Ovary (tissue), 10 donors: ENCODE measurements at regions of chr14 and their contacts with region 1.

Region 1: DNA sequence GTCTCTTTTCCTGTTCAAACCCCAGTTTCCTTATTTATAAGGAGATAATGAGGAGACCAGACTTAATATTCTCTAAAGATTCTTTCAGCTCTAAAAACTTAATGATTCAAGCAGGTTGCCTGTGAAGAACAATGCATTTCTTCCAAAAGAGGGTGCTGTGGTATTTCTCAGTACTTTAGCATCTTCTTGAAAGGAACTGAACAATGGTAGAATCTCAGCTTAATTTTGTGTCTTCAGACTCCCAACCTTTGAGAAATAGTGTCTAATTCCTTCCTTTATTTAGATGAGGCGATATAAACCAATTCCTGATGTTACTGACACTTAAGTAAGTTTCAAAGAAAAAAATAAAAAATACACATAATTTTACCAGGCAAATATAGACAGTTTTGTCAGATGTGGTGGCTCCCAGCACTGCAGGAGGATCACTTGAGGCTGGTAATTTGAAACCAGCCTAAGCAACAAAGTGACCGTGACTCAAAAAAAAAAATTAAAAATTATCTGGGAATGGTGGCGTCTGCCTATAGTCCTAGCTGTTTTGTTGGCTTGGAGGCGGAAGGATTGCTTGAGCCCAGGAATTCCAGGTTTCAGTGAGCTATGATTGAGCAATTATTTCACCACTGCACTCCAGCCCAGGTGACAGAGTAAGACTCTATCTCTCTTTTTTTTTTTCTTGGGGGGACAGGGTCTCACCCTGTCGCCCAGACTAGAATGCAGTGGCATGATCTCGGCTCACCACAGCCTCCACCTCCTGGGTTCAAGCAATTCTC is 76.9 kb upstream of the PSMA6 start:
- DNase-seq: no peak
- H3K4me3 ChIP-seq: no peak overlapping the region
- H3K27ac ChIP-seq: peak overlapping the region in 1 of 2 donors; percentile 79
- H3K4me1 ChIP-seq: peaks cover 1% of the 10 kb centered on the region
- H3K27me3 ChIP-seq: no peaks in the 10 kb centered on the region
- CTCF ChIP-seq: peak in 2 of 3 donors; percentile 25 to 53
- EP300 ChIP-seq: no peak
- POLR2A ChIP-seq: no peak

Region 2: GRCh38 chr14:35140718-35141581 is 74.3 kb before region 1 on chr14:
- intact Hi-C with region 1: loop called in 2 of 4 experiments (anchors 10 kb)
- DNase-seq: no peak
- H3K4me3 ChIP-seq: no peak overlapping the region
- H3K27ac ChIP-seq: no peak overlapping the region
- H3K4me1 ChIP-seq: no peaks in the 10 kb centered on the region
- H3K27me3 ChIP-seq: no peaks in the 10 kb centered on the region
- CTCF ChIP-seq: peak in 2 of 3 donors; percentile 37 to 60
- EP300 ChIP-seq: no peak
- POLR2A ChIP-seq: no peak

Region 3: DNA sequence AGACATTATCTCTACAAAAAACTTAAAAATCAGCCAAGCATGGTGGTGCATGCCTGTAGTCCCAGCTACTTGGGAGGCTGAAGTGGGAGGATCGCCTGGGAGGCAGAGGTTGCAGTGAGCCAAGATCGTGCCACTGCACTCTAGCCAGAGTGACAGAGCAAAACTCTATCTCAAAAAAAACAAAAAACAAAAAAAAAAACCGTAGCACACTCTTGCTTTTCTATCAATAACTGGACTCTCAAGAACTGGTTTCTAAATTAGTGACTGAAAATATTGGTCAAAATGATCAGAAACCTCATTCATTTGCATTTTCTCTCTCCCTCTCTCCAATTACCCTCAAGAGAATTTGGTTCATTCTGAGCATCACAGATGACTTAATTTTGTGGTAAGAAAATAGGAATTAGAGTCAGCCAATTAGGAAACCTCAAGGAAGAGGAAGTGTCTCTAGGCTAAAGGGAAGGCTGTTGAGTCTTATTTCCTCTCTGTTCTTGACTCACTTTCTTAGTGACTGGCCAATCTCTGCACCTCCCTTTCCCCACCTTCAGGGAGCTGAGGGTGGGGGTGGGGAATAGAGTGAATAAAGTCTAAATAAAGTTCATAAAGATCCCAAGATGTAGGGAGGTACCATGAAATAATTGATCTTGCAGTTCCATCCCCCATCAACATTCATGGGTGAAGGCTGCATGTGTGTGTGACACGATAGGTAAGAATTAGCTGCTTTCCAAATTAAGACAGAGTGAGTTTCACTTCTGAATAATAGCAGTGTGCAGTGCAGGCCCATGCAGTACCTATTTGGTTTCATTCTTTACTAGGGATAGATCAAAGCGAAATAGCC is 70.1 kb after region 1 on chr14:
- intact Hi-C with region 1: loop called in 1 of 4 experiments (anchors 10 kb)
- DNase-seq: no peak
- H3K4me3 ChIP-seq: no peak overlapping the region
- H3K27ac ChIP-seq: no peak overlapping the region
- H3K4me1 ChIP-seq: no peaks in the 10 kb centered on the region
- H3K27me3 ChIP-seq: no peaks in the 10 kb centered on the region
- CTCF ChIP-seq: no peak
- EP300 ChIP-seq: no peak
- POLR2A ChIP-seq: no peak

Region 4: DNA sequence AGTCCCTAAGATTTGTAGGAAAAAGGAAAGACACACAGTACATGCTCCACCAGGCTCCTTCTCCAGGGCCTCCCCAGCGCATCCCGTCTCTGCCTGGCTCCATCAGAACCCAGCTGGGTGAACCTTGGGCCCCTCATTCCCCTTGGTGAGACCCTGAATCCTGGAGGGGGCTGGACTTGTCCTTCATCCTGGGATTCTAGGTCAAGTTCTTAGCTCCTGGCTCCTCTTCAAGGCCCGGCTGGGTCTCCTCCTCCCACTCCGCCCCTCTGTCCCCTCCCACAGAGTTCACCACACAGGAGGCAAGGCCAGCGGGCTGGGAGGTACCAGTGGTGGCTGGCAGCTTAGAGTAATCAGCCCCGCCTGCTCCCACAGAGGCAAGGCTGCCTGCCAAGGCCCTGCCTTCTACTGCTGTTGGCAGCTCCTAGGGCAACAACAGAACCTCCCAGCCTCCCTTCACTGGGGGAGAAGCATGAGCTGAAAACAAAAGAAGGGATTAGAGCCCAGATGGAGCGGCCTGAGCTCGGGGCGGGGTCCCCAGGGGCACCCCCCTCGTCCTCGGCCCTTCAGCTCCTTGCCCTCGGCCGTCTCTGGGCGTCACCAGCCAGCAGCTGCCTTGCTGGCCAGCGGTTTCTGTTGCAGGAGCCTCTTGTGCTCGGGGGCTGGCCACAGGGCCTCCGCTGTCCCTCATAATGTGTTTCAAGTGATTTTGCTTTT is 126.3 kb after region 1 on chr14:
- intact Hi-C with region 1: loop called in 1 of 4 experiments (anchors 10 kb)
- DNase-seq: peak; percentile 91 to 96 (median 94)
- H3K4me3 ChIP-seq: peak overlapping the region; percentile 3
- H3K27ac ChIP-seq: peak overlapping the region; percentile 67 to 87
- H3K4me1 ChIP-seq: peaks cover 37% of the 10 kb centered on the region
- H3K27me3 ChIP-seq: no peaks in the 10 kb centered on the region
- CTCF ChIP-seq: no peak
- EP300 ChIP-seq: no peak
- POLR2A ChIP-seq: peak; percentile 6

Region 5: DNA sequence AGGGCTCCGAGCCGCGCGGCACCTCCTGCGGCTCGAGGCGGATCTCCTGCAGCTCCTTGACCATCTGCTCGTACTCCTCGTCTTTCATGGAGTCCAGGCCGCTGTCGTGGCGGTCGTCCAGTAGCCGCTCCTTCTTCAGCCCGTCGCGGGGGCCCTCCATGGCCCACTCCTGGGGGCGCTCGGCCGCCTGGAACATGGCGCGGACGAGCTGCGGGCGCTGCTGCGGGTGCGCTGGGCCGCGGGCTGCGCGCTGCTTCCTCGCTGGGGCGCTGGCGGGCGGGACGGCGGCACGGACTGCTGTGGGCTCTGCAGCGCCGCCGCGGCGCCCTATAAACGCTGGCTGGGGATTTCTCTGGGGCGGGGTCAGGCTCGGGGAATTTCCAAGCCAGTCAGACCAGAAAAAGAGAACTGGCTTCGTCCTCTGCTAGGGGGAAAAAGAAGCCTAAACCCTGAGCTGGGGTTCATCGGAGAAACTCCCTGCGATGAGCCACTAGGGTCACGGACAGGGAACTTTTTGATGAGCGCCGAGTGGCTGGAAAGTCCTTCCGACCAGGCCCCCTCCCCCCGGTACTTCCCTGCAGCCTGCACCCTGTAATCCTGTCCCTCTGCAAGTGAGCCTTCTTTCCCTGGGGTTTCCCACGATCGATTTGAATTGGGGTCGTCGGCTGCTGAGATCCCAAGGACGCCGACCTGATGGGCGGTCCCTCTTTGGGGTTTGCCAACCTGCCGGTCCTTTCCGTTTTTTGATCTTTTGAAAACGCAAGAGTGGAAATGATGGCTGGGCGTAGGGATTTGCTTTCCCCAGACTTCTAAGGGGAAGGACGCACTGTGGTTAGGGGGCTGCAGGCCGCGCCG is 189.4 kb after region 1 on chr14 and contains the start of gene NFKBIA:
- intact Hi-C with region 1: loop called in 3 of 4 experiments (anchors 5 kb)
- DNase-seq: peak; percentile 88 to 95 (median 91)
- H3K4me3 ChIP-seq: peak within 1 kb of the TSS; percentile 95
- H3K27ac ChIP-seq: peak within 1 kb of the TSS; percentile 96 to 99
- H3K4me1 ChIP-seq: peaks cover 15% of the 10 kb centered on the region
- H3K27me3 ChIP-seq: no peaks in the 10 kb centered on the region
- CTCF ChIP-seq: peak; percentile 7 to 44 (median 20)
- EP300 ChIP-seq: no peak
- POLR2A ChIP-seq: peak; percentile 97
- total RNA-seq, gene NFKBIA: 162 to 1,807 (median 236) TPM

Region 6: DNA sequence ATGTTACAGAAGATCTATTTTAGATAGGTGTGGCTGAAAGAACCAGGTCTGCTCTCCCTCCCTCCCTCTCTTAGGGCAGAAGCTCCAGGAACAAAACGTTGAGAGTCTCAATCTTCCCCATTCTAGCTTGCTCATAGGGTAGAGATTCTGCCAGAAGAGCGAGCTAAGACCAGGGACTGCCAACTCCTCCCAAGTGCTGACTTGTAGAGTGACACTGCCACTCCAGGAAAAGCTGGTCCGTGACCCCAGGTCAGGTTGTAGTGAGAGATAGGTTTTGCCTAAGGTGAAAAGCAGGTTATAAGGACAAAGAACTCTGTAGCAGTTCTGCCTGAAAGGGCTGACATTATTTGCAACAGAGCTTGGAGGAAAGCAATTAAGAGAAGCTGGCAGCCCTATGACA is 392.1 kb after region 1 on chr14:
- intact Hi-C with region 1: no loop called
- DNase-seq: no peak
- H3K4me3 ChIP-seq: no peak overlapping the region
- H3K27ac ChIP-seq: no peak overlapping the region
- H3K4me1 ChIP-seq: no peaks in the 10 kb centered on the region
- H3K27me3 ChIP-seq: no peaks in the 10 kb centered on the region
- CTCF ChIP-seq: no peak
- EP300 ChIP-seq: no peak
- POLR2A ChIP-seq: no peak